Pancreas (tissue), 10 donors: ENCODE measurements at regions of chr3 and their contacts with region 1.

Region 1: DNA sequence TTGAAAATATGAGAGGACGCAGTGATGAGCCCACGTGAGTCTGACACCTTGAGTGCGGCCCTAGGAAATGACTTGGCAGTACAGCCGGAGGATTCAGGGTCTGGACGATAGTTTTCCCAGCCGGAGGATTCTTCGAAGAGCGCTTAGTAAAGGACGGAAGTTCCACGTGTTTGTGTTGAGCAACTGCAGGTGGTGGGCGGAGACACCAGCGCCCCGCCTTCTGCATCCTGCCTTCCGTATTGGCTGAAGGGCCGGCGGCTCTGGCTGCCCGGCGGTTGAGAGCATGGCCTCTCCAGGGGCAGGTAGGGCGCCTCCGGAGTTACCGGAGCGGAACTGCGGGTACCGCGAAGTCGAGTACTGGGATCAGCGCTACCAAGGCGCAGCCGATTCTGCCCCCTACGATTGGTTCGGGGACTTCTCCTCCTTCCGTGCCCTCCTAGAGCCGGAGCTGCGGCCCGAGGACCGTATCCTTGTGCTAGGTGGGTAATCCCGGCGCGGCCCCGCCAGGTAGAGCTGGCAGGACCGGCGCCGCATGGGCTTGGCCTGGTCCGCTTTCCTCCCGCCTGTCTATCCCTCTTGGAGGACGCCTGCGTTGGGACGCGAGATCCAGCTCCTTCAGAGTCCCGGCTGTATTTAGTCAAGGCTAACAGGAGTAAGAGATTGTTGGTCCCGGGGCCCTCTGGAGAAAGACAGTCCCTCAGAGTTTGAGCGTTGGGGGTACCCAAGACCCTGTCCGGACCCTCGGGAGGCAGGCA is at the start of gene EEF1AKMT4:
- DNase-seq: peak; percentile 93 to 99 (median 98)
- ATAC-seq: peak; percentile 95 to 99 (median 96)
- H3K4me3 ChIP-seq: peak within 1 kb of the TSS; percentile 61 to 91 (median 76)
- H3K27ac ChIP-seq: peak within 1 kb of the TSS; percentile 61 to 84 (median 78)
- H3K4me1 ChIP-seq: peaks cover 3 to 14% (median 4%) of the 10 kb centered on the region in 3 donors
- H3K27me3 ChIP-seq: no peaks in the 10 kb centered on the region
- CTCF ChIP-seq: peak; percentile 18 to 66 (median 45)
- total RNA-seq, gene EEF1AKMT4: 1.9 to 5.3 (median 3.1) TPM

Region 2: GRCh38 chr3:183895296-183895695 is 354.3 kb before region 1 on chr3:
- intact Hi-C with region 1: loop called in 1 of 3 experiments (anchors 10 kb)
- DNase-seq: peak in 2 of 6 donors; percentile 22 to 50
- ATAC-seq: peak; percentile 73 to 97 (median 94)
- H3K4me3 ChIP-seq: no peak overlapping the region
- H3K27ac ChIP-seq: no peak overlapping the region
- H3K4me1 ChIP-seq: no peaks in the 10 kb centered on the region
- H3K27me3 ChIP-seq: no peaks in the 10 kb centered on the region
- CTCF ChIP-seq: peak; percentile 56 to 70 (median 60)

Region 3: GRCh38 chr3:184145111-184145524 is 104.5 kb before region 1 on chr3:
- intact Hi-C with region 1: loop called in 1 of 3 experiments (anchors 5 kb)
- DNase-seq: peak in 4 of 6 donors; percentile 59 to 71 (median 62)
- ATAC-seq: peak; percentile 84 to 99 (median 95)
- H3K4me3 ChIP-seq: no peak overlapping the region
- H3K27ac ChIP-seq: no peak overlapping the region
- H3K4me1 ChIP-seq: no peaks in the 10 kb centered on the region
- H3K27me3 ChIP-seq: no peaks in the 10 kb centered on the region
- CTCF ChIP-seq: peak; percentile 13 to 28 (median 24)

Region 4: DNA sequence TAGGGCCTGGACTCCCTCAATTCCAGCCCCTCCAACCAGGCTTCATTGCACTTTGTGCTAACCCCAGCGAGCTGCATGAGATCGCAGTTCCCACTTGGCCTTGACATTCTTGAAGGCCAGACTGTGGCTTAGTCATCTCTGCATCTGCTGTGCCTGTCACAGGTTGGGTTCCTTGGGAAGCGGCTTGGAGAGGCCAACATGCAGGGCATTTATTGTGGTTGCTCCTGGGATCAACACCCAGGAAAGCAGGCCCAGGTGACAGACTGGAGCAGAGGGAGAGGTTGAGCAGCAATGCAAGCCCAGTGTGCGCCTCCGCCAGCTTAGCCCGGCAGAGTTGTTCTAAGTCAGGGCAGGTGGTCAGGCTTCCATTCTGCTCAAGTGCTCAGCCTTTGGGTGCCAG is 53.1 kb before region 1 on chr3:
- intact Hi-C with region 1: loop called in 1 of 3 experiments (anchors 10 kb)
- DNase-seq: no peak
- ATAC-seq: peak in 2 of 4 donors; percentile 59 to 64
- H3K4me3 ChIP-seq: no peak overlapping the region
- H3K27ac ChIP-seq: no peak overlapping the region
- H3K4me1 ChIP-seq: no peaks in the 10 kb centered on the region
- H3K27me3 ChIP-seq: no peaks in the 10 kb centered on the region
- CTCF ChIP-seq: no peak

Region 5: DNA sequence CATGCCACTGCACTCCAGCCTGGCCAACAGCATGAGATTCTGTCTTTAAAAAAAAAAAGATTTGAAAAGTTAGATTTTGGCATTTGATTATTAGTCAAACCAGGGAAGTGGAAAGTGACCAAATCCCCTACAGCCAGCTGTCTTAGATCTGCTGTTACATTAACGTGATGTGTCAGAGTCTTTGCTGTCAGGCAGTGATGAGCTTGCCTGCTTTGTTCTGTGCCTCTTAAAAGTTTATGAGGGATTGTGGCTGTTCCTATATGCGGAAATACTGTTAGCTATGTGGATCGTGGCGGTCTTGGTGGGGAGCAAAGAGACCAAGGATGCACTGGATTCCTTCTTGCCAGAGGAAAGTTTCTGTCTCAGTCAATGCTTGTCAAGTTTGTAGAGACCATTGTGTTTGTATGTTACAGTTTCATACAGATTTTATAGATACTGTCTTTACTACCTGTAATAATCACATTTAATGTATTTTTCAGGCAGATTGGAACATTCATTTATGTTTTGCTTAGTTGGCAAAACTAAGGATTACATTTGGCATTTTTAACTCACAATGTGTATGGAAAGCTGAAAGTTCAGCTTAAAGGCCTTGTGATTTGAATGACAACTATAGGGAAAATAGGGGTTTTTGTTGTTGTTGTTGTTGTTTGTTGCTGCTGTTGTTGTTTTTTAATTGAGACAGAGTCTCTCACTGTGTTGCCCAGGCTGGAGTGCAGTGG is 699.8 kb after region 1 on chr3:
- intact Hi-C with region 1: no loop called
- DNase-seq: no peak
- ATAC-seq: no peak
- H3K4me3 ChIP-seq: no peak overlapping the region
- H3K27ac ChIP-seq: no peak overlapping the region
- H3K4me1 ChIP-seq: no peaks in the 10 kb centered on the region
- H3K27me3 ChIP-seq: no peaks in the 10 kb centered on the region
- CTCF ChIP-seq: no peak